Dorsolateral prefrontal cortex (tissue), 120 donors: ENCODE measurements at regions of chr22 and their contacts with region 1.

Region 1: GRCh38 chr22:27880778-27881394 is 38.2 kb downstream of the PITPNB start:
- DNase-seq: peak in 2 of 10 donors; percentile 33 to 61
- H3K4me3 ChIP-seq: peak overlapping the region in 34 of 59 donors; percentile 1 to 48 (median 23)
- H3K27ac ChIP-seq: peak overlapping the region; percentile 71 to 96 (median 87)
- H3K27me3 ChIP-seq: no peaks in the 10 kb centered on the region
- CTCF ChIP-seq: peak; percentile 65 to 90 (median 84)

Region 2: GRCh38 chr22:26756675-26757293 is 1124.1 kb before region 1 on chr22:
- intact Hi-C with region 1: loop called in 1 of 2 experiments (anchors 5 kb)
- DNase-seq: peak in 9 of 10 donors; percentile 49 to 78 (median 67)
- H3K4me3 ChIP-seq: peak overlapping the region; percentile 4 to 64 (median 40)
- H3K27ac ChIP-seq: peak overlapping the region in 29 of 59 donors; percentile 8 to 79 (median 55)
- H3K27me3 ChIP-seq: no peaks in the 10 kb centered on the region
- CTCF ChIP-seq: peak in 55 of 56 donors; percentile 70 to 100 (median 94)

Region 3: DNA sequence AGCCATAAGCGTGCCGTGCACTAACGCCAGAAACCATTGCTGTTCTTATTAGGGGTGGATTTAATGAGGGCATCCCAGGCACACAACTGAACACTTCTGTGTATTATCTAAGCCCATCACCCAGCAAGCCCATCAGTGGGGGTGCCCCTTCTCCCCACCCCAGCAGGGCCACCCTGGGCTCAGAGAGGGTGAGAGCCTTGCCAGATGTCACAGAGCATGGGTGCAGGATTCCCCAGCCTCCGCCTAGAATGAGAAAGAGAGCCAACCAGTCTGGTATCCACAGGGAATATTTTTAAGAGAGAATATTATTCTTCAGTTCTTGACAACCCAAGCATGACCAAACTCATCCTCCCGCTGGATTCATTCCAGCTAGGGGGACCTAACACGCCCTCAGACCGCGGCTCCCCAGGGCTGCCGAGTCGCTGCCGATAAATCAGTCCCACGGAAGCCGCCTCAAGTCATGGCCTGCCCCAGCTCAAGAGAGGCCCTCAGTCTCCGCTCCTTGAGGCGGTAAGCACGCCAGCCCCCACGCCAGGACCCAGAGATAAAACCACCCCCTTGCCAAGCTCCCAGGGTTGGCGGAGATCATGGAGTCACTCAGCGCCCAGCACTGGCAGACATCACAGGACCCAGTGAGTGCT is 126.5 kb before region 1 on chr22:
- intact Hi-C with region 1: no loop called
- DNase-seq: no peak
- H3K4me3 ChIP-seq: no peak overlapping the region
- H3K27ac ChIP-seq: peak overlapping the region in 1 of 59 donors; percentile 51
- H3K27me3 ChIP-seq: no peaks in the 10 kb centered on the region
- CTCF ChIP-seq: no peak

Region 4: DNA sequence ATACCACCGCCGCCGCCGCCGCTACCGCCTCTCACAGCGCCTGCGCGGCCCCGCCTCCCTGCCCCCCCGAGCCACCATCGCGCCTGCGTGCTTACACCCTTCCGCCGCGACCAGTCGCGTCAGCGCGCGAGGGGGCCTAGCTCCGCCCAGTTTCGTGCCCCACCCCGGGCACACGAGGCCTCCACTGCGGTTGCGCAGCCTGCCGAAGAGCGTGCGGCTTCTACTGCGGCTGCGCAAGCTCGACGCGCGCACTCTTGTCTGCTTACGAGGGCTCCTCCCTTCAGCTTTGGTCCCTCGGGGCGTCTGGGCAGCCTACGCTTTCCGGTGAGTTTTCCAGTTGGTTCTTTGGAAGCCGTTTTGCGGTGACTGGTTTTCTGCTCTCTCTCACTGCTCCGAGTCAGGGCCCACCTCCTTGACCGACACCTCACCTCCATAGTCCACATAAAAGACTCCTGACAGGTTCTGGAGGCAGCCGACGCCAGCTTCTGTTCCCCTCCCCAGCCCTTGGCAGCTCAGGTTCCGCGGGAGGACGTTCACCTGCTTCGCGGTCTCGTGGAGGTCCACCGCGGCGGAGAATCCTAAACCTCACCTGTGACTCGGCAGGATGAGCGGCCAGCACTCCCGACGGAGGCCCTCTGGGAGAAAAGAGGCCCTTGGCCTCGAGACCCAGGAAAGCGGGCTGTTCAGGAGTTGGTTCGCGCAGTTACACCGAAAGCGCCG is 38.5 kb after region 1 on chr22 and contains the start of gene PITPNB:
- intact Hi-C with region 1: loop called in 1 of 2 experiments (anchors 2 kb)
- DNase-seq: peak; percentile 84 to 96 (median 93)
- H3K4me3 ChIP-seq: peak within 1 kb of the TSS; percentile 63 to 100 (median 93)
- H3K27ac ChIP-seq: peak within 1 kb of the TSS; percentile 49 to 96 (median 90)
- H3K27me3 ChIP-seq: no peaks in the 10 kb centered on the region
- CTCF ChIP-seq: peak in 16 of 56 donors; percentile 9 to 47 (median 20)
- total RNA-seq, gene PITPNB: 55.3 to 116 (median 83.1) TPM

Region 5: DNA sequence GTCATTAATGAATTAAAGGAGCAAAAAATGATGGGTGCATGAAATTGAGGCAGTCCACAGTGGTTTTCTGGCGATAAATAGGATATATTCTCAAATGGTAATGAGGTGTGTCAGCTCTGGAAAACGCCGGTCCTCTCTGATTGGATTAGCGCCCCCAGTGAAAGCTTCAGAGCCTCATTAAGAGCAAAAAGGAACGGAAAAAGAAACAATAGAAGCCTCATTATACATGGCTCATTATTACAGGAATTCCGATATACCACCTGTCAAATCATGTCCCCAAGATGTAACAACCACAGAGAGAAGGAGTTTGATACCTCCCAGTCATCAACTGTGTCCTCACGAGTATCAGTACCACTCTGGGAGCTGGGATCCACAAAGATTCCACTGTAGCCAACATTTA is 213.9 kb after region 1 on chr22:
- intact Hi-C with region 1: no loop called
- DNase-seq: no peak
- H3K4me3 ChIP-seq: no peak overlapping the region
- H3K27ac ChIP-seq: no peak overlapping the region
- H3K27me3 ChIP-seq: no peaks in the 10 kb centered on the region
- CTCF ChIP-seq: no peak